Caco-2 (cell line): ENCODE measurements at regions of chr12 and their contacts with region 1.

Region 1: GRCh38 chr12:106955377-106956047 is at the start of gene TMEM263:
- DNase-seq: peak; percentile 95 to 97
- H3K4me3 ChIP-seq: peak within 1 kb of the TSS; percentile 65
- H3K4me3 Mint-ChIP-seq: peak within 1 kb of the TSS; percentile 97
- H3K27ac Mint-ChIP-seq: peak within 1 kb of the TSS; percentile 99
- H3K4me1 ChIP-seq: no peaks in the 10 kb centered on the region; the same call in 1 of the 2 replicates
- H3K4me1 Mint-ChIP-seq: no peaks in the 10 kb centered on the region
- H3K27me3 ChIP-seq: no peaks in the 10 kb centered on the region
- H3K27me3 Mint-ChIP-seq: no peaks in the 10 kb centered on the region
- CTCF ChIP-seq: no peak
- total RNA-seq, gene TMEM263: 31.6 and 32.7 TPM in 2 replicates

Region 2: DNA sequence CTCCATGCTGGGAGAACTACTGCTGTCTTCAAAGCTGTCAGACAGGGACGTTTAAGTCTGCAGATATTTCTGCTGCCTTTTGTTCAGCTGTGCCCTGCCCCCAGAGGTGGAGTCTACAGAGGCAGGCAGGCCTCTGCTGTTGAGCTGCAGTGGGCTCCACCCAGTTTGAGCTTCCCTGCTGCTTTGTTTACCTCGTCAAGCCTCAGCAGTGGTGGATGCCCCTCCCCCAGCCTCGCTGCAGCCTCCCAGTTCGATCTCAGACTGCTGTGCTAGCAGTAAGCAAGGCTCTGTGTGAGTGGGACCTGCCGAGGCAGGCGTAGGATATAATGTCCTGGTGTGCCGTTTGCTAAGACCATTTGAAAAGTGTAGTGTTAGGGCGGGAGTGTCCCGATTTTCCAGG is 404.1 kb before region 1 on chr12:
- CTCF ChIA-PET with region 1: no interaction called
- POLR2A ChIA-PET with region 1: no interaction called
- intact Hi-C with region 1: no loop called
- DNase-seq: no peak
- H3K4me3 ChIP-seq: no peak overlapping the region
- H3K4me3 Mint-ChIP-seq: no peak overlapping the region
- H3K27ac Mint-ChIP-seq: no peak overlapping the region
- H3K4me1 ChIP-seq: no peaks in the 10 kb centered on the region
- H3K4me1 Mint-ChIP-seq: no peaks in the 10 kb centered on the region
- H3K27me3 ChIP-seq: no peaks in the 10 kb centered on the region
- H3K27me3 Mint-ChIP-seq: peaks cover 10% of the 10 kb centered on the region
- CTCF ChIP-seq: no peak

Region 3: GRCh38 chr12:106704081-106704480 is 251.4 kb before region 1 on chr12:
- CTCF ChIA-PET with region 1: no interaction called
- POLR2A ChIA-PET with region 1: no interaction called
- intact Hi-C with region 1: no loop called
- DNase-seq: no peak
- H3K4me3 ChIP-seq: no peak overlapping the region
- H3K4me3 Mint-ChIP-seq: no peak overlapping the region
- H3K27ac Mint-ChIP-seq: no peak overlapping the region
- H3K4me1 ChIP-seq: no peaks in the 10 kb centered on the region
- H3K4me1 Mint-ChIP-seq: no peaks in the 10 kb centered on the region
- H3K27me3 ChIP-seq: no peaks in the 10 kb centered on the region; the same call in 1 of the 2 replicates
- H3K27me3 Mint-ChIP-seq: no peaks in the 10 kb centered on the region
- CTCF ChIP-seq: no peak

Region 4: DNA sequence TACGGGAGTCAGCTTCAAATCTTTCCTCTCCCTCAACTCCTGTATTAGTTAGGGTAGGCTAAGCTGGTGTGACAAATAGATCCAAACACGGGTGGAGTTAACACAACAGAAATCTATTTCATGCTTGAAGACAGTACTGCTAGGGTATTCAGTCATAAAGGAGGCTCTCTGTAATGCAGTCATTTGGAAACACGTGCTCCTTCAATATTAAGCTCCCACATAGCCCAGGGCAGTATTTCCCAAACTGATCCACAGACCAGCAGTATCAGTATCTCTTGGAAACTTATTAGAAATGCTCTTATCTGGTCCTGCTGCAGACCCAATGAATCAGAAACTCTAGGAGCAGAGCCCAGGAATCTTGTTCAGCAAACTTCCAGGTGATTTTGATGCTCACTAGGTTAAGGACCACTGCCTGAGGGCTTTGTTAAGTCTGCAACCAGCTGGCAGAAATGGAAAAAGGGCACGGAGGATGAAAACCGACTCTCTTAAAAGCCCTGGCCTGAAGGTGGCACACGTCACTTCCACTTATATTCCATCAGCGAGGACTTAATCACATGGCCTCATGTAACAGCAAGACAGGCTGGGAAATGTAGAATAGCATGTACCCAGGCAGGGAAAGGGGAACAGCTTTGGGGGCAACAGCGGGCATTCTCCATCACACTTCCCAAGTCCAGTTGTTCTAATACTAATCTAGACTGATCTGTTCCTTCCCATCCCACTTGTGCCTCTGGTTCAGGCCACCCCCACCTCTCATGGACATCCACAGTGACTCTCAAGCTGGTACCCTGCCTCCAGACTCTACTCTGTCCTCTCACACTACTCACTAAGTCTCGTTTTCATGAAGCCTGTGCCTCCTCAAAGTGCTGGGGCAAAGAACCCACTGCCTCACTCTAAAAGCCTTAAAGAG is 219.2 kb before region 1 on chr12:
- CTCF ChIA-PET with region 1: no interaction called
- POLR2A ChIA-PET with region 1: no interaction called
- intact Hi-C with region 1: no loop called
- DNase-seq: no peak
- H3K4me3 ChIP-seq: no peak overlapping the region
- H3K4me3 Mint-ChIP-seq: no peak overlapping the region
- H3K27ac Mint-ChIP-seq: no peak overlapping the region
- H3K4me1 ChIP-seq: peaks cover 10% of the 10 kb centered on the region
- H3K4me1 Mint-ChIP-seq: no peaks in the 10 kb centered on the region
- H3K27me3 ChIP-seq: 0 out of 2 replicates have a peak, but pooled peaks cover 1% of the 10 kb centered on the region
- H3K27me3 Mint-ChIP-seq: peaks cover 7% of the 10 kb centered on the region
- CTCF ChIP-seq: no peak

Region 5: GRCh38 chr12:106774005-106774807 is 181.3 kb before region 1 on chr12 and contains the start of gene RIC8B:
- CTCF ChIA-PET with region 1: no interaction called
- POLR2A ChIA-PET with region 1: no interaction called
- intact Hi-C with region 1: loop called (anchors 5 kb)
- DNase-seq: peak; percentile 96 to 98
- H3K4me3 ChIP-seq: peak within 1 kb of the TSS; percentile 79
- H3K4me3 Mint-ChIP-seq: peak within 1 kb of the TSS; percentile 95
- H3K27ac Mint-ChIP-seq: peak within 1 kb of the TSS; percentile 98
- H3K4me1 ChIP-seq: peaks cover 11% of the 10 kb centered on the region; the same call in 1 of the 2 replicates
- H3K4me1 Mint-ChIP-seq: peaks cover 14% of the 10 kb centered on the region
- H3K27me3 ChIP-seq: no peaks in the 10 kb centered on the region
- H3K27me3 Mint-ChIP-seq: no peaks in the 10 kb centered on the region
- CTCF ChIP-seq: peak in 1 of 2 experiments; percentile 7
- total RNA-seq, gene RIC8B: 7.8 and 7.9 TPM in 2 replicates

Region 6: DNA sequence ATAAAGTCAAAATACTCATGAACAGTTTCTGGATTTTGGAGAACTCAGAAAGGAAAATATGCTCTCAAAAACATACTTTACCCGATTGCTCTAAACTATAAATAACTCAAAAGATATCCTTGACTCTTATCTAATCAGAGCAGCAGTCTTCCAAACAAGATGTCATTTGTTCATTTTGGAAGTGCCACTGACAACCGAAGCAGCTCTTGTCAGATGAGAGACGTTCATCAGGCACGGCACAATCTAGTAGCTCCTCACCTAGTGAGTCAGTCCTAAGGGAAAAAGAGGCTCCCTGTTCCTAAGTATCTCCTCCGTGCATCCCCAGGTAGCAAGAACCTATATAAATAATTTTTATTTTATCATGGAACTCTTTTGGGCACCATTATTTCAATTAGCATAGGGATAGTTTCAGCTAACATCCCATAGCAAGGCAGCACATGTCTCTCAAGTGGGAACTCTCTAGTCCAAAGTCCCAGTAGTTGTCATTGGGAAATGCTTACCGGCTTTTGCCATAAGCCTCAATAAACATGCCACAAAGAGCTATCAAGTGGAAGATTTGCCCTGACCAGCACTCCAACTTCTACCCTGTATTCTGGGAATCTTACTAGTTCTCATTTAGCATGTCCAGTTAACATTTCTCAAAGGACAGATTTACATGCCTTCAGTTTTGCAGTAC is 13.9 kb before region 1 on chr12:
- CTCF ChIA-PET with region 1: interaction called, 7 read pairs
- POLR2A ChIA-PET with region 1: interaction called, 12 read pairs
- intact Hi-C with region 1: no loop called
- DNase-seq: peak in 1 of 2 experiments; percentile 24
- H3K4me3 ChIP-seq: no peak overlapping the region
- H3K4me3 Mint-ChIP-seq: no peak overlapping the region
- H3K27ac Mint-ChIP-seq: no peak overlapping the region
- H3K4me1 ChIP-seq: peaks cover 5% of the 10 kb centered on the region; the same call in 1 of the 2 replicates
- H3K4me1 Mint-ChIP-seq: peaks cover 9% of the 10 kb centered on the region
- H3K27me3 ChIP-seq: no peaks in the 10 kb centered on the region
- H3K27me3 Mint-ChIP-seq: no peaks in the 10 kb centered on the region
- CTCF ChIP-seq: no peak

Region 7: DNA sequence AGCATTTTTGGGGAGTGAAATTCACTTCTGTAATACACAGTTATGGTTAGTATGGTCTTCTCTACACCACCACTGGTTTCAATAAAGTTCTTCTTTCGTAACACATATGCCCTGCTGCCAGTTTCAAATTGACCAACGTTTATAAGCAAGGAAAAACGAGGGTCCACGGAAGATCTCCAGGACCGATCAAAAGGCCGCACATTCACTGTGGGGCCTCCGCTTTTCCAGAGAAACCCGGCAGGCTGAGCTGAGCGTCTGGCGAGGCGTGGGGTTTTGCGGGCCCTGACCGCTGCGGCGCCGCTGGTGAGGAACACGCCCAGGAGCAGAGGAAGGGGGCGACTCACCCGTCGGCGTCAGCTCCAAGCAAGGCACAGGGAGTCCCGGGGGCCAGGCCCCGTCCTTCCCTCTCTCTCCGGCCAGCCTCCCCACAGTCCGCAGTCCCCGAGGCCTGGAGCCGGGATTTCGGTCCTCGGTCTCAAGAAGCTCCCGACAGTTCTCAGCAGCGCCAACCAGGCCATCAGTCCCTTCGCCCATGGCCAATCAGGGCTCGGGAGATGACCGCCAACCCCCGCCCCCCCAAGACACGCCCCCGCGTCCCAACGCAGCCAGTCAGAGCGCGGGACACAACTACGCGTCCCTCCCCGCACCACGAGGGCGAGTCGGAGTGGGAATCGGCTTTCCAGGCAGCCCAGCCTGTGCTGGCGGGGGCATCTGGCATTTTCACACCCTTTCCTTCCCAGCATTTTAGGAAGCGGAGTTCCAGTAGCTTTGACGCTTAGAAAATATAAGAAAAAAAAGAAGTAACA is 31.3 kb after region 1 on chr12 and contains the start of gene MTERF2:
- CTCF ChIA-PET with region 1: interaction called, 3 read pairs
- POLR2A ChIA-PET with region 1: interaction called, 12 read pairs
- intact Hi-C with region 1: no loop called
- DNase-seq: peak; percentile 92 to 94
- H3K4me3 ChIP-seq: peak within 1 kb of the TSS; percentile 83
- H3K4me3 Mint-ChIP-seq: peak within 1 kb of the TSS; percentile 92
- H3K27ac Mint-ChIP-seq: peak within 1 kb of the TSS; percentile 87
- H3K4me1 ChIP-seq: peaks cover 5% of the 10 kb centered on the region; the same call in 1 of the 2 replicates
- H3K4me1 Mint-ChIP-seq: peaks cover 8% of the 10 kb centered on the region
- H3K27me3 ChIP-seq: no peaks in the 10 kb centered on the region
- H3K27me3 Mint-ChIP-seq: no peaks in the 10 kb centered on the region
- CTCF ChIP-seq: no peak
- total RNA-seq, gene MTERF2: 9.8 and 10.1 TPM in 2 replicates

Region 8: DNA sequence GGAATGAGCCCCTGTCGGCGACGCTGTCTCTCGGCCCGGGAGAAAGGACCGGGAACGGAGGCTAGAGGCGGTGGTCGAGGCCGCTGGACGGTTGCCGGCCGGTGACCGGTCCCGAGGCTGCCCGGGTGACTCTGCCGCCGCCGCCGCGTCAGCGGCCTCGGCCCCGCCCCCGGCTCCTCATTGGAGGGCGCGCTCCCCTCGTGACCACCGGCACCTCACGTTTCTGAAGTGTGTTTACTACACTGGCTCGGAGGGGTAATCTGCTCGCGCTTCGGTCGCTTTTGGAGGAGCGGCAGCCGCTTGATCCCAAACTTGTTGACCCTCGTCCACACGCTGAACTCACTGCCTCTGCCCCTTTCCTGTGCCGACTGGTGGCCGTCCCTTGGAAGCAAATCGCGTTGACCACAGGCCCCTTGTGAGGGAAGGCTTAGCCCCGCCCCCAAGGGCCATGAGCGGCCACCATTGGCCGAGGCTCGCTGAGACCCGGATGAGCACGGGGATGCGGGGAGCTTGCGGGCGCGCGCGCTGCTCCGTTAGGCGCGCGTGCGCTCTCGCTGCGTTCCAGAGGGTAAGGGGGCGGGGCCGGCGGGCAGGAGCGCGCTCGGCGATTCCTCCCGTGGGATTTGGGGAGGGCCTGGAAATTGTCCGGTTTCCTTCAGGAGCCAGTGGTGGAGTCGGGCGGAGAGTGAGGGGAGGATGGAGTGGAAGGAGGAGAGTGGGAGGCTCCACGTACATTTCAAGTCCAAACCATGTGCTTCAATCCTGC is 138.1 kb after region 1 on chr12 and contains the start of gene CRY1:
- CTCF ChIA-PET with region 1: no interaction called
- POLR2A ChIA-PET with region 1: interaction called, 4 read pairs
- intact Hi-C with region 1: loop called (anchors 1 kb)
- DNase-seq: peak; percentile 94 to 96
- H3K4me3 ChIP-seq: peak within 1 kb of the TSS; percentile 49
- H3K4me3 Mint-ChIP-seq: no peak within 1 kb of the TSS
- H3K27ac Mint-ChIP-seq: no peak within 1 kb of the TSS
- H3K4me1 ChIP-seq: peaks cover 11% of the 10 kb centered on the region; the same call in 1 of the 2 replicates
- H3K4me1 Mint-ChIP-seq: peaks cover 7% of the 10 kb centered on the region
- H3K27me3 ChIP-seq: no peaks in the 10 kb centered on the region
- H3K27me3 Mint-ChIP-seq: no peaks in the 10 kb centered on the region
- CTCF ChIP-seq: no peak
- total RNA-seq, gene CRY1: 19.4 and 22.2 TPM in 2 replicates